Panc1 (cell line): ENCODE measurements at regions of chr17 and their contacts with region 1.

Region 1: GRCh38 chr17:17191346-17191792 is 14.8 kb downstream of the PLD6 start:
- DNase-seq: peak; percentile 41
- ATAC-seq: no peak; the same call in 1 of the 2 replicates
- H3K4me3 ChIP-seq: no peak overlapping the region
- H3K27ac ChIP-seq: no peak overlapping the region
- H3K4me1 ChIP-seq: no peaks in the 10 kb centered on the region
- H3K27me3 ChIP-seq: no peaks in the 10 kb centered on the region
- CTCF ChIP-seq: no peak

Region 2: DNA sequence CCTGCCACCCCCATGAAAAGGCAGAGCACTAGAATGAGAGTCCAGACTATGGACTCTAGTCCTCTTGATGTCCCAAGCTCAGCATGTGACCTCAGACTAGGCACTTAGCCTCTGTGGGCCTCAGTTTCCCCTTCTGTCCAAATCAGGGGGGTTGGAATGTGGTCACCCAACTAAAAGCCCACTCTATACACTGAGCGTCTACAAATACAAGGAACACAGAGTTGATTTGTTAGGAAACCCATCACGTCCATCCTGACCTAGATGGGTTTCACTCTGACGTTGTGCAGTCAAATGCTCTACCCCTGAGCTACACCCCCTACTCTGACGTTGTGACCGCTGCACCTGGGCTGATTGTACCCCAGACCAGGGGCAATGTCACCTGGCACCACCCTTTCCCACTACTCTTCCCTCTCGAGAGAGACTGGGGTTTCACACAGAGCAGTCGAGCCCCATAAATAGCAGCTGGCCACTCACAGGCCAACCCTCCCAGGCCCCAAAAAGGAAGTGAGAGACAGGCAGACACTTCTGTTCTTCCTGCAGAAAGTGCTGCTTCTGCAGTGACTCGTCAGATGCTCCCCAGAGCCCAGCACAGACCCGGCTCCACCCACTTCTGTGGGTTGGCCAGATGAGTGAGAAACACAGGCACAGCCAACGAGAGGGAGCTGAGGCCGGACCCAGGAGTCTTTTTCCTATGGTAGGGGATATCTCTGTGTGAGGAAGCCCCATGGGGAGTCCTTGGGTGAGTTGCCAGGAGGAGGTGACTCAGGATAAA is 203.4 kb before region 1 on chr17:
- CTCF ChIA-PET with region 1: interaction called, 7 read pairs
- POLR2A ChIA-PET with region 1: no interaction called
- in situ Hi-C with region 1: no loop called
- intact Hi-C with region 1: loop called (anchors 10 kb)
- DNase-seq: no peak
- ATAC-seq: no peak
- H3K4me3 ChIP-seq: no peak overlapping the region
- H3K27ac ChIP-seq: no peak overlapping the region
- H3K4me1 ChIP-seq: no peaks in the 10 kb centered on the region
- H3K27me3 ChIP-seq: no peaks in the 10 kb centered on the region
- CTCF ChIP-seq: no peak

Region 3: GRCh38 chr17:17237026-17237799 is 45.8 kb after region 1 on chr17 and contains the start of gene FLCN:
- CTCF ChIA-PET with region 1: no interaction called
- POLR2A ChIA-PET with region 1: interaction called, 11 read pairs
- in situ Hi-C with region 1: no loop called
- intact Hi-C with region 1: no loop called
- DNase-seq: peak; percentile 70
- ATAC-seq: peak; percentile 92
- H3K4me3 ChIP-seq: peak within 1 kb of the TSS; percentile 91 to 97
- H3K27ac ChIP-seq: peak within 1 kb of the TSS; percentile 98
- H3K4me1 ChIP-seq: peaks cover 3% of the 10 kb centered on the region; the same call in 1 of the 2 replicates
- H3K27me3 ChIP-seq: no peaks in the 10 kb centered on the region
- CTCF ChIP-seq: no peak
- total RNA-seq, gene FLCN: 71.6 TPM